Posterior vena cava (tissue), 2 donors: ENCODE measurements at regions of chr12 and their contacts with region 1.

Region 1: DNA sequence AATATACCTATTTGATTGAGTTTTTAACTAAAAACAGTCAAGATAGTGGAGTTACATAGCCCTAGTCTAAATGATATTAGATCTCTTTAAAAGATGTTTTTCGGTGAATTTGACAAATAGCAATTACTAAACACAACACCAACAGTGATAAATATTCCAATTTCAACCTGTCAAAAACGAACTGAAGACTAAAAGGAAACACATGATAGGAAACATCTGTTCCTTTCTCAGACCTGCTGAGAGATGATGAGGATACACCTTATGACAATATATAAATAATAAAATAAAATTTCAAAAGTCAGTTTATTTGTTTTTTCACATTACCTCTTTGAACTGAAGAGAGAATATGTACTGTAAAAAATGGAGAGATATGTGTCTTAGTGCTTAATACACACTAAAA is 232.7 kb downstream of the RASSF9 start:
- DNase-seq: no peak

Region 2: DNA sequence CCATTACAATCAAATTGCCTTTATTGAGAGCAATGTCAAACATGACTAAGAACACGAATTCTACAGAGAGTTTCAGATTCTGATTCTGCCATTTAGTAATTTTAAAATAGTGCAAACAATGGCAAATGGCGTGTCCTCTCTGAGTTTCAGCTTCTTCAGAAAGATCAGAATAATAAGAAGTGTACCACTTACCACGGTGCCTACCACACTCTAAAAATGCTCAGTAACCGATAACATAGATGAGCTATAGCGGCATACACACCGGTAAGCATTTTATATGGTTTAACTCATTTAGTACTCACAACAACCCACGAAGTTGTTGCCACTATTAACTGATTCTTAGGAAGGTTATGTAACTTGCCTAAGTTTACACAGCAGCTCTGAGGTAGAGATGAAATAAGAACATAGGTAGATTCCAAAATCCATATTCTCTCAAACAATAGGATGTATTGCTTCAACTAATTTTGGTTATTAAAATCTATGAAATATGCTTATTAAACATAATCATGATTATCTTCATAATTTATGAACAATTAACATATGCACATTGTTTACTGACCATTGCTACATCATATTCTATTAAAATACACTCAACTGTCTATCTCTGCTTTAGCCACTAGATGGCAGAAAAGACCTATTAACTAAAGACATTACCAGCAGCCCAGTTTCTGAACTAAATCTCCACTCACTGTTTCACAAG is 729.3 kb before region 1 on chr12:
- intact Hi-C with region 1: no loop called
- DNase-seq: no peak

Region 3: GRCh38 chr12:85405781-85406522 is 197.6 kb before region 1 on chr12:
- intact Hi-C with region 1: no loop called
- DNase-seq: no peak

Region 4: GRCh38 chr12:85527192-85527591 is 76.4 kb before region 1 on chr12:
- intact Hi-C with region 1: no loop called
- DNase-seq: no peak

Region 5: DNA sequence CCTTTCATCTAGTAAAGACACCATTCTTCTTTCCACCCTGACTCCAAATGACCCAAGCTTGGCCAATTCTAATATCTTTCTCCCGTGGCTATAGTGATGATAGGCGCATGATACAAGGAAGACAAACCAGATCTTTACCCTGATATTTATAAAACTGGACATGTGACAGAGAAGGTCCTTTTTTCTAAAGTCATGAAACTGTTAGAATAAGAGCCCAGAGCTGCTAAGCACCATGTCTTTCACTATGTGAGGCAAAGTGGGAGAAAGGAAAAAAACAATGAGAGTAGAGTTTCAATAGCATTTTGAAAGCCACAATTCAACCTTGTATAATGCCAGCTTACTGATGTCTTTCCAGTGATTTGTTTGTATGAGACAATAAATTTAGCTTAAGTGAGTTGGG is 20.2 kb after region 1 on chr12:
- intact Hi-C with region 1: loop called in 1 of 2 experiments (anchors 1 kb)
- DNase-seq: no peak